Aorta (tissue), 5 donors: ENCODE measurements at regions of chr3 and their contacts with region 1.

Region 1: GRCh38 chr3:119955972-119956371 is 138.3 kb downstream of the GSK3B start:
- DNase-seq: no peak
- ATAC-seq: no peak
- H3K4me3 ChIP-seq: no peak overlapping the region
- H3K27ac ChIP-seq: no peak overlapping the region
- H3K4me1 ChIP-seq: peaks cover under 1 to 2% of the 10 kb centered on the region in 2 donors
- H3K27me3 ChIP-seq: no peaks in the 10 kb centered on the region

Region 2: GRCh38 chr3:119924111-119925094 is 31.6 kb before region 1 on chr3:
- intact Hi-C with region 1: loop called in 1 of 2 experiments (anchors 5 kb)
- DNase-seq: no peak
- ATAC-seq: no peak
- H3K4me3 ChIP-seq: no peak overlapping the region
- H3K27ac ChIP-seq: no peak overlapping the region
- H3K4me1 ChIP-seq: no peaks in the 10 kb centered on the region
- H3K27me3 ChIP-seq: no peaks in the 10 kb centered on the region